ENCODE measurements at regions of chr15 and their contacts with region 1.

Region 1: DNA sequence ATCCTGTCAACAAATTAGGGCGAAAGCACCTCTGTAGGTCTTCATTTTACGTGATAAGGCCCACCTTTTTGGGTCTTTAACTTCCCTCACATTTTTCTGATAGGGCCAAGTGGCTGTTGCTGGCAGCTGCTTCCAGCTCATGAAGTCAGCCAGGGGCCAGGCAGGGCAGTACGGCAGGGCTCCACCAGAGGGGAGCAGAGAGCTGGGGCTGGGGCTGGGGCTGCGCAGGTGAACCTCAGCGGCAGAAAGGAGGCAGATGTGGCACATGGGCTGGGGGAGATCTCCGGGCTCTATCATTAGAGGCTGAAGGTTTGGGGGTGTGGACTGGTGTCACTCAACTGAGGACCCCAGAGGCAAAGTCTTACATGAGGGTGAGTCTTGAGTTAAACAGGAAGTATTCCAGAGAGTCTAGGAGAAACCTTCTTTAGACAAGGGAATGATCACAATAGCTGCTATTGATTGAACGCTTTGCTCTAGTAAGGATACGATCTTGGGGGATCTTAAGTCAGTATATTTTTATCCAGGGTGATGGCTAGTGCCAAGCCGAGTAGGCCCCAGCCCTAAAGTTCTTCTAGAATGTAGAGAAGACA is 62.8 kb upstream of the MEX3B start:
- DNase-seq: peak; percentile 69
- H3K4me3 Mint-ChIP-seq: no peak overlapping the region
- H3K27ac Mint-ChIP-seq: no peak overlapping the region
- H3K4me1 Mint-ChIP-seq: peaks cover 13% of the 10 kb centered on the region
- H3K27me3 Mint-ChIP-seq: no peaks in the 10 kb centered on the region
- CTCF ChIP-seq: peak; percentile 98

Region 2: DNA sequence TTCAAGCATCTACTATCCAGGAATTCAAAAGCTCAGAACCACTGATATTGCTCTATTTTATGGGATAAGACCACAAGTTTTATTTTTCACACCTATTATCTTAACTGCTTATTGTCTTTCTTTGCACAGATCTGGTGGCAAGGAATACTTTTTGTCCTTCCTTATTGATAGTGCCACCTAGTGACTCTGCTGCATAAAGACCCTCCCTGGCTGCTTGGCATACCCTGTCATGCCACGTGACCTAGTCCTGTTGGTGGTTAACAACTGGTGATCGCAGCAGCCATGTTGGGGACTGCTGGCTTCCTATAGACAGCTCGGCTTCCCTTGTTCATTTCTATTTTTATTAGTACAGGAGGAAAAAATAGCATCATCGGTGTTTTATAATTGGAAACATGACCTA is 299.0 kb before region 1 on chr15:
- CTCF ChIA-PET with region 1: no interaction called
- POLR2A ChIA-PET with region 1: no interaction called
- intact Hi-C with region 1: loop called (anchors 10 kb)
- DNase-seq: peak; percentile 24
- H3K4me3 Mint-ChIP-seq: no peak overlapping the region
- H3K27ac Mint-ChIP-seq: no peak overlapping the region
- H3K4me1 Mint-ChIP-seq: no peaks in the 10 kb centered on the region
- H3K27me3 Mint-ChIP-seq: no peaks in the 10 kb centered on the region
- CTCF ChIP-seq: no peak

Region 3: GRCh38 chr15:82003916-82004315 is 104.7 kb before region 1 on chr15:
- CTCF ChIA-PET with region 1: no interaction called
- POLR2A ChIA-PET with region 1: no interaction called
- intact Hi-C with region 1: no loop called
- DNase-seq: no peak
- H3K4me3 Mint-ChIP-seq: no peak overlapping the region
- H3K27ac Mint-ChIP-seq: no peak overlapping the region
- H3K4me1 Mint-ChIP-seq: no peaks in the 10 kb centered on the region
- H3K27me3 Mint-ChIP-seq: no peaks in the 10 kb centered on the region
- CTCF ChIP-seq: no peak

Region 4: DNA sequence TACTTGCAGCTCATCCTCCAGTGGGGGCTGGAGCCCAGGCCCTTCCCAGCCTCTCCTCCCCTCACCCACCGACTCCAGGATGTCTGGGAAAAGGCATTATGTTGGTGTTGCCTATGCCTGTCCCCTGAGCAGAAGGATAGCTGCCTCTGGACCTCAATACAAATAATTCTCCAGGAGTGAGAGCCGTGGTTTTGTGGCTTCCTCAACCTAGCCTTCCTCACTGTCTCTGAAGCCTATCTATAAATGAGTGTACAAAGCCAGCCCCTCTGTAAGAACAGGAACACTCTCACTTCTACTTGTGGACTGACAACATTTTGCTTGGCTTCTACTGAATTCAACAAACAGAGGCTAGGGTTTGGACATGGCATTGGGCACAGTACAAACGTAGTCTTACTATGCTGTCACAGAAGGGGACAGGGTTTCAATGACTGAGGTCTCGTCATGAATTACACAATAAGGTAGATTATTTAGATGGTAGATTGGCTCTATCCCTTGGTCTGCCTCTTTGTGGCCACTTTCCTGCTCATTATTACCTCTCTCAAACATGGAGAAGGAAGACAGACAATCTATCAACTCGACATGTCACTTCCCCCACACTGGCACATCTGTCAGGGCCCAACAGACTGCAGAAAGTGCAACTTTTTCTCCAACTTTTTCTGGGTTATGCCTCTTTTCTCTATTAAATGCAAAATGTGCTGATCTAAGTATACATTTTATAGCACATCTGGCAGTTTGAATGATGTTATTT is 20.0 kb after region 1 on chr15:
- CTCF ChIA-PET with region 1: interaction called, 14 read pairs
- POLR2A ChIA-PET with region 1: no interaction called
- intact Hi-C with region 1: no loop called
- DNase-seq: no peak
- H3K4me3 Mint-ChIP-seq: no peak overlapping the region
- H3K27ac Mint-ChIP-seq: no peak overlapping the region
- H3K4me1 Mint-ChIP-seq: peaks cover 19% of the 10 kb centered on the region
- H3K27me3 Mint-ChIP-seq: no peaks in the 10 kb centered on the region
- CTCF ChIP-seq: no peak

Region 5: DNA sequence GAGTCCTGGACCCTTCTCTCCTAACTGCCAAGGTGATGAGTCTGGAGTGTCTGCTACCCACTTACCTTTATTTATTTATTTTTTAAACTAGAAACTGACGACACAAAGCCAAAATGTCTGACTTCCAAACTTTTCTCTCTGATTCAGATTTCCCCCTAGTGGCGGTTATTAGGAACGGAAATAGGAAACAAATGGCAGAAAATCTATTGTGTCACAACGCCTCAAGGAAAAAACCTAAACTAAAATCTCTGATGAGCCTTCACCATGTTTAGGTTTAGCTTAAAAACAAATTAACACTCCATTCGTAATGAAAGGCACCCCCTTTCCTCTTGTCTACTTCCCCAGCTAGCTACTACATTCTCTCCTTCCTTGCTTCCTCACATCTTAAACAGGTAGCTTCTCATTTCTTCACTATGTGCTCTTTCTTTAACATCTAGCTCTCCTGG is 31.3 kb after region 1 on chr15:
- CTCF ChIA-PET with region 1: interaction called, 17 read pairs
- POLR2A ChIA-PET with region 1: interaction called, 3 read pairs
- intact Hi-C with region 1: loop called (anchors 1 kb)
- DNase-seq: peak; percentile 66
- H3K4me3 Mint-ChIP-seq: no peak overlapping the region
- H3K27ac Mint-ChIP-seq: peak overlapping the region; percentile 1
- H3K4me1 Mint-ChIP-seq: peaks cover 8% of the 10 kb centered on the region
- H3K27me3 Mint-ChIP-seq: no peaks in the 10 kb centered on the region
- CTCF ChIP-seq: peak; percentile 59

Region 6: GRCh38 chr15:82197733-82198594 is 89.4 kb after region 1 on chr15:
- CTCF ChIA-PET with region 1: interaction called, 20 read pairs
- POLR2A ChIA-PET with region 1: interaction called, 5 read pairs
- intact Hi-C with region 1: loop called (anchors 1 kb)
- DNase-seq: peak; percentile 82
- H3K4me3 Mint-ChIP-seq: no peak overlapping the region
- H3K27ac Mint-ChIP-seq: no peak overlapping the region
- H3K4me1 Mint-ChIP-seq: peaks cover 6% of the 10 kb centered on the region
- H3K27me3 Mint-ChIP-seq: no peaks in the 10 kb centered on the region
- CTCF ChIP-seq: peak; percentile 83

Measured in MCF 10A (cell line).